Mammary epithelial cell (primary cell): ENCODE measurements at regions of chr7 and their contacts with region 1.

Region 1: GRCh38 chr7:143490717-143491306 is 13.1 kb downstream of the TAS2R41 start:
- DNase-seq: no peak
- H3K4me3 ChIP-seq: no peak overlapping the region
- H3K27ac ChIP-seq: no peak overlapping the region
- H3K4me1 ChIP-seq: no peaks in the 10 kb centered on the region
- H3K27me3 ChIP-seq: no peaks in the 10 kb centered on the region
- CTCF ChIP-seq: peak; percentile 47 to 83

Region 2: DNA sequence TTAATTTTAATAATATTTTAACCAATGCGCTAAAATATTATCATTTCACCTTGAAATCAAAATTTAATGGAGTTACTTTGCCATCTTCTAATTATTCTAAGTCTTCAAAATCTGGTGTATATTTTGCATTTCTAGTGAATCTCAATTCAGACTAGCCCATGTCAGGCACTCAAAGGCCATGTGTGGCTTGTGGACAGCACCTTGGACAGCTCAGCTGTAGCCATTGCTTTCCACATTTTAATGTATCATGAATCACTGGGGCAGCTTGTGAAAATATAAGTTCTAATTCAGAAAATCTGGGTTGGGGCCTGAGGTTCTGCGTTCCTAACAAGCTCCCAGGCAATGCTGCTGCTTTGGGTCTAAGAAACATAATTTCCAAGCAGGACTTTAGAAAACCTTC is 1322.1 kb before region 1 on chr7:
- CTCF ChIA-PET with region 1: no interaction called
- dilution Hi-C with region 1: no loop called
- in situ Hi-C with region 1: no loop called
- intact Hi-C with region 1: no loop called
- DNase-seq: peak; percentile 18
- H3K4me3 ChIP-seq: no peak overlapping the region
- H3K27ac ChIP-seq: no peak overlapping the region
- H3K4me1 ChIP-seq: no peaks in the 10 kb centered on the region
- H3K27me3 ChIP-seq: no peaks in the 10 kb centered on the region
- CTCF ChIP-seq: no peak

Region 3: GRCh38 chr7:143085109-143085508 is 405.7 kb before region 1 on chr7:
- CTCF ChIA-PET with region 1: no interaction called
- dilution Hi-C with region 1: no loop called
- in situ Hi-C with region 1: no loop called
- intact Hi-C with region 1: no loop called
- DNase-seq: no peak
- H3K4me3 ChIP-seq: no peak overlapping the region
- H3K27ac ChIP-seq: no peak overlapping the region
- H3K4me1 ChIP-seq: no peaks in the 10 kb centered on the region
- H3K27me3 ChIP-seq: no peaks in the 10 kb centered on the region
- CTCF ChIP-seq: no peak

Region 4: GRCh38 chr7:143214789-143215679 is 275.8 kb before region 1 on chr7:
- CTCF ChIA-PET with region 1: no interaction called
- dilution Hi-C with region 1: no loop called
- in situ Hi-C with region 1: no loop called
- intact Hi-C with region 1: no loop called
- DNase-seq: peak; percentile 67
- H3K4me3 ChIP-seq: no peak overlapping the region
- H3K27ac ChIP-seq: no peak overlapping the region
- H3K4me1 ChIP-seq: no peaks in the 10 kb centered on the region
- H3K27me3 ChIP-seq: no peaks in the 10 kb centered on the region
- CTCF ChIP-seq: peak; percentile 99 to 100

Region 5: GRCh38 chr7:143458263-143458662 is 32.5 kb before region 1 on chr7:
- CTCF ChIA-PET with region 1: no interaction called
- dilution Hi-C with region 1: loop called (anchors 5 kb)
- in situ Hi-C with region 1: no loop called
- intact Hi-C with region 1: no loop called
- DNase-seq: peak; percentile 13
- H3K4me3 ChIP-seq: no peak overlapping the region
- H3K27ac ChIP-seq: no peak overlapping the region
- H3K4me1 ChIP-seq: no peaks in the 10 kb centered on the region
- H3K27me3 ChIP-seq: no peaks in the 10 kb centered on the region
- CTCF ChIP-seq: no peak